Esophagus muscularis mucosa (tissue), 4 donors: ENCODE measurements at regions of chr4 and their contacts with region 1.

Region 1: GRCh38 chr4:40149960-40150385 is 46.9 kb upstream of the RHOH start:
- DNase-seq: no peak
- H3K4me3 ChIP-seq: no peak overlapping the region
- H3K27ac ChIP-seq: no peak overlapping the region
- H3K4me1 ChIP-seq: peaks cover 0 to under 1% (median 0%) of the 10 kb centered on the region in 4 donors
- H3K27me3 ChIP-seq: no peaks in the 10 kb centered on the region
- CTCF ChIP-seq: peak; percentile 85 to 89 (median 87)
- EP300 ChIP-seq: no peak
- POLR2A ChIP-seq: no peak

Region 2: DNA sequence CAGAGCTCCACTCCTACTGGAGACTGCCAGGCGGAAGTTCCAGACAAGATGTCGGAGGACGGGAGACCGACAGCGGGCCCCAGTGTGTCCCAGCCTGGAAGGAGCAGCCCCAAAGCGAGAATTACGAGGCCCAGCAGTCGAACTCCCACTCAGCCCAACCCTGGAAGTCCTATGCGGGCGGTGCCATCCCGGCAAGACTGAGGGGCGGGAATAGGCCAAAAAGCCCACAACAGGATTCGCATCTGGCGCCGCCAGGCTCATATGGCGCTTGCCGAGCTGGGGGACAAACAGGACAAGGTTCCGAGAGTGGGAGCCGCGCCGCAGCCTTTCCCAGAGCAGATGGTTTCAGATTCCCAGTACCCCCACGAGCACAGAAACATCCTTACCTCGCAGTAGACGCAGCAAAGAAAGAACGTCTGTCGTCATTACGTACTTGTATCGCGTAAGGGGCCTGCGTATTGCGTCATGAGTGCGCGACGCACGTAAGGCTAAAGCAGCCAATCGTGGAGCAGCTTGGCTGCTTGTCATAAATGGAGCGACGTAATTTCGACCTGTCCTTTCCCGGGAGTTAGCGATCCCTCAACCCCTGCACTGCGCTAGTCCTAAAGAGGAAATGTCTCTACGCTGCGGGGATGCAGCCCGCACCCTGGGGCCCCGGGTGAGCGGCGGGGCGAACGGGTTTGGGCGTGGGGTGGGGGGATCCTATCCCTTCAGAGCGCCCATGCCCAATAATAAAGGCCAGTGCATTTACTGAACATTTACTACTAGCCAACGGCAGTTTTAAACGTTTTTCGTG is 691.3 kb before region 1 on chr4 and contains the starts of genes LIAS and RPL9:
- intact Hi-C with region 1: no loop called
- DNase-seq: peak; percentile 99
- H3K4me3 ChIP-seq: peak within 1 kb of the TSS; percentile 70 to 86 (median 77)
- H3K27ac ChIP-seq: peak within 1 kb of the TSS; percentile 95 to 96 (median 96)
- H3K4me1 ChIP-seq: peaks cover 24 to 47% (median 42%) of the 10 kb centered on the region in 4 donors
- H3K27me3 ChIP-seq: no peaks in the 10 kb centered on the region
- CTCF ChIP-seq: peak in 1 of 3 experiments; percentile 12
- EP300 ChIP-seq: no peak
- POLR2A ChIP-seq: peak; percentile 92
- total RNA-seq, gene LIAS: 8.5 to 11.6 (median 9.7) TPM
- total RNA-seq, gene RPL9: 1,962 to 6,543 (median 3,653) TPM

Region 3: GRCh38 chr4:40114206-40114605 is 35.8 kb before region 1 on chr4:
- intact Hi-C with region 1: no loop called
- DNase-seq: no peak
- H3K4me3 ChIP-seq: no peak overlapping the region
- H3K27ac ChIP-seq: no peak overlapping the region
- H3K4me1 ChIP-seq: peaks cover 0 to 10% (median 7%) of the 10 kb centered on the region in 4 donors
- H3K27me3 ChIP-seq: no peaks in the 10 kb centered on the region
- CTCF ChIP-seq: no peak
- EP300 ChIP-seq: no peak
- POLR2A ChIP-seq: no peak

Region 4: GRCh38 chr4:40309250-40309774 is 159.3 kb after region 1 on chr4:
- intact Hi-C with region 1: loop called (anchors 2 kb)
- DNase-seq: peak; percentile 96
- H3K4me3 ChIP-seq: peak overlapping the region in 1 of 4 donors; percentile 35
- H3K27ac ChIP-seq: no peak overlapping the region
- H3K4me1 ChIP-seq: peaks cover 6 to 9% (median 8%) of the 10 kb centered on the region in 4 donors
- H3K27me3 ChIP-seq: no peaks in the 10 kb centered on the region
- CTCF ChIP-seq: peak; percentile 76 to 91 (median 81)
- EP300 ChIP-seq: no peak
- POLR2A ChIP-seq: no peak

Region 5: GRCh38 chr4:40325189-40326019 is 175.4 kb after region 1 on chr4:
- intact Hi-C with region 1: loop called (anchors 2 kb)
- DNase-seq: no peak
- H3K4me3 ChIP-seq: no peak overlapping the region
- H3K27ac ChIP-seq: no peak overlapping the region
- H3K4me1 ChIP-seq: peaks cover 0 to 22% (median 8%) of the 10 kb centered on the region in 4 donors
- H3K27me3 ChIP-seq: no peaks in the 10 kb centered on the region
- CTCF ChIP-seq: peak; percentile 72 to 79 (median 72)
- EP300 ChIP-seq: no peak
- POLR2A ChIP-seq: no peak